GM12878 (cell line): ENCODE measurements at regions of chr9 and their contacts with region 1.

Region 1: GRCh38 chr9:36995927-36996705 is 38.0 kb downstream of the PAX5 start:
- DNase-seq: no peak
- ATAC-seq: peak; percentile 55
- H3K4me3 ChIP-seq: peak overlapping the region; percentile 47
- H3K27ac ChIP-seq: peak overlapping the region; percentile 93
- H3K4me1 ChIP-seq: peaks cover 88% of the 10 kb centered on the region
- H3K27me3 ChIP-seq: no peaks in the 10 kb centered on the region
- CTCF ChIP-seq: peak; percentile 71 to 86 (median 86)
- EP300 ChIP-seq: no peak
- POLR2A ChIP-seq: peak; percentile 29; the same call in 1 of the 2 replicates
- RAD21 ChIP-seq: peak; percentile 85

Region 2: GRCh38 chr9:36400332-36401163 is 595.6 kb before region 1 on chr9:
- CTCF ChIA-PET with region 1: no interaction called
- POLR2A ChIA-PET with region 1: no interaction called
- RAD21 ChIA-PET with region 1: no interaction called
- SMC1A ChIA-PET with region 1: no interaction called
- in situ Hi-C with region 1: no loop called
- intact Hi-C with region 1: no loop called
- DNase-seq: peak; percentile 42
- ATAC-seq: peak; percentile 90
- H3K4me3 ChIP-seq: peak overlapping the region; percentile 76
- H3K27ac ChIP-seq: peak overlapping the region; percentile 89
- H3K4me1 ChIP-seq: peaks cover 13% of the 10 kb centered on the region
- H3K27me3 ChIP-seq: no peaks in the 10 kb centered on the region
- CTCF ChIP-seq: 0 out of 6 replicates have a peak, but pooled peaks of 1 of the 3 experiments have one; percentile 3
- EP300 ChIP-seq: no peak; a peak in 1 of 4 replicates
- POLR2A ChIP-seq: peak; percentile 88
- RAD21 ChIP-seq: no peak

Region 3: DNA sequence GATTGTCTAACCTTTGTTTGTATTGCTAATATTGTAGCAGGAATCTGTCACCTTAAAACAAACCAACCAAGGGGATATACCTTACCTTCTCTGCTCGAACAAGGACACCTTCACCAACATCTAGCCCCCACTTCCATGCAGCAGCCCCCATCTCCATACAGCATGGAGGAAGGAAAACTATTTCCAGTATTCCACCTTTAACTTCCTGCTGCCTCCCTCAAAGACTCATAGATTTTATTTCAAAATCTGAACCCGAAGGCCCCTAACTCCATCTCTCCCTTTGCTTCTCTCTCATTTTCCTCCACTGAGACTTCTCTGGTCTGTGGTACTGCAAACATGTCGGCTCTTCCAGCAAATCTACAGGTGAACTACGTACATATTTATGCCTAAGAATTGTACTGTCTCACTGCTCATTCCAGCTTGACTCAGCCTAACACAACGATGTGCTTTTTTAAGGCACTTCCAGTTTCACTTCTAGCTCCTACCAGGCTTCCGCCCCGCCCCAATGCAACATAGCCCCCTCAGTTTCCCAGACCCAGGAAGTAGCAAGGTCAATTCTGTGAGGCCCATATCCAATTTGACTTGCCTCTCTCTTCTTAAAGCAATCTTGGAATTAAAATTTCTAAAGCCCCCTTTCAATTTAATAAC is 525.3 kb before region 1 on chr9:
- CTCF ChIA-PET with region 1: no interaction called
- POLR2A ChIA-PET with region 1: no interaction called
- RAD21 ChIA-PET with region 1: no interaction called
- SMC1A ChIA-PET with region 1: no interaction called
- in situ Hi-C with region 1: no loop called
- intact Hi-C with region 1: no loop called
- DNase-seq: peak; percentile 67
- ATAC-seq: peak; percentile 98
- H3K4me3 ChIP-seq: peak overlapping the region; percentile 66
- H3K27ac ChIP-seq: peak overlapping the region; percentile 91
- H3K4me1 ChIP-seq: peaks cover 15% of the 10 kb centered on the region
- H3K27me3 ChIP-seq: no peaks in the 10 kb centered on the region
- CTCF ChIP-seq: no peak
- EP300 ChIP-seq: 0 out of 4 replicates have a peak, but pooled peaks of 1 of the 2 experiments have one; percentile 11
- POLR2A ChIP-seq: peak; percentile 53
- RAD21 ChIP-seq: no peak

Region 4: DNA sequence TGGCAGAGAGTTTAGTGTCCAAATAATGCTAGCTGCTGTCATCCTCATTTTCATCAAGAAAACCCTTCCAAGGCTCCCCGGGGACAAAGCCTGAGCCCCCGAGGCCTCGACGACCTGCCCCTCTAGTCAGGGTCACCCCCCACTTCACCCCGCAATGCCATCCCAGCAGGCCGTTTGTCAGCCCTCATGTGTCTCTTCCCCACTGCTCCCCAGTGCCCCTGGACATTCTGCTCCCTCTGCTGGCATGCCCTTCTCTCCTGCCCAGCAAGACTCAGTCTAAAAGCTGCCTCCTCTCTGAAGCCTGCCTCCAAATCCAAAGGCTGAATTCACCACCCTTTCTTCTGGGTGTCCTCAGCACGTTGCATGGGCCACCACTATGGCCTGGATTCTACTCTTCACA is 21.4 kb before region 1 on chr9:
- CTCF ChIA-PET with region 1: interaction called, 22 read pairs
- POLR2A ChIA-PET with region 1: no interaction called
- RAD21 ChIA-PET with region 1: interaction called, 4 read pairs
- SMC1A ChIA-PET with region 1: interaction called, 10 read pairs
- in situ Hi-C with region 1: no loop called
- intact Hi-C with region 1: no loop called
- DNase-seq: no peak
- ATAC-seq: no peak
- H3K4me3 ChIP-seq: no peak overlapping the region
- H3K27ac ChIP-seq: no peak overlapping the region
- H3K4me1 ChIP-seq: no peaks in the 10 kb centered on the region
- H3K27me3 ChIP-seq: no peaks in the 10 kb centered on the region
- CTCF ChIP-seq: peak in 1 of 3 experiments; percentile 26; a peak in 2 of 6 replicates
- EP300 ChIP-seq: no peak
- POLR2A ChIP-seq: 0 out of 2 replicates have a peak, but pooled peaks have one; percentile 29
- RAD21 ChIP-seq: no peak

Region 5: DNA sequence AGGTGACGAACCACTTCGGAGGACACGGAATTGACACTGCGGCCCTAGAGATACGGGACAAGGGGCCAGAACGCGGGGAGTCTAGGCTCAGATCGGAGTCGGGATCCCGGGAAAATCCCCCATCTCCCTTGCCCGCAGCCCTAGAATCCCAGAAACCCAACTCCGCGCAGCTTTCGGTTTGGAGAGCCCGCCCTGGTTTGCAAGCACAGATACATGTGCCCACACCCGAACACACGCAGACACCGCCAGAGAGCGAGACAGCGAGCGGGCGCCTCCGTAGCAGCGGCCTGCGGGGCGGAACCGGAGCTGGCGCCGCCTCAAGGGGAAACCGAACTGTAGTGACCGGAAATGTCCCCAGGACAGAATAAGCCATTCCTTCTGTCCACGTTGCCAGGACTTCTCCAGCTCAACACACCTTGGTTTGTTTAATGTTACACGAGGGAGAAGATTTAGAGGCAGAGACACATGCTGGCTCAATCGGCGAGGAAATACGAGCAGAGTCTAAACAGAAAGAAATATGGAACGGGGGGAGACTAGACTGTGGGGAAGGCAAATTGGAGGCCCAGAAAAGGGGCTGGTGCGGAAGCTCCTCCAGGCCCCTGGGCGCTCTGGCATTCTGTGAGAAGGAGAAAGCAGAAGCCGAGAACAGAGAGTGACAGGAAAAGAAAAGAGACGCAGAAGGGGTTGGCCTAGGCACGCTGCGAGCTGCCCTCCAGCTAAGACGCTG is 40.8 kb after region 1 on chr9:
- CTCF ChIA-PET with region 1: interaction called, 41 read pairs
- POLR2A ChIA-PET with region 1: interaction called, 354 read pairs
- RAD21 ChIA-PET with region 1: interaction called, 175 read pairs
- SMC1A ChIA-PET with region 1: interaction called, 12 read pairs
- in situ Hi-C with region 1: no loop called
- intact Hi-C with region 1: no loop called
- DNase-seq: no peak
- ATAC-seq: peak; percentile 52
- H3K4me3 ChIP-seq: peak overlapping the region; percentile 96
- H3K27ac ChIP-seq: peak overlapping the region; percentile 92
- H3K4me1 ChIP-seq: peaks cover 8% of the 10 kb centered on the region
- H3K27me3 ChIP-seq: no peaks in the 10 kb centered on the region
- CTCF ChIP-seq: 0 out of 6 replicates have a peak, but pooled peaks of 1 of the 3 experiments have one; percentile 2
- EP300 ChIP-seq: no peak
- POLR2A ChIP-seq: 0 out of 2 replicates have a peak, but pooled peaks have one; percentile 2
- RAD21 ChIP-seq: no peak

Region 6: GRCh38 chr9:37187713-37188439 is 191.8 kb after region 1 on chr9:
- CTCF ChIA-PET with region 1: interaction called, 26 read pairs
- POLR2A ChIA-PET with region 1: interaction called, 18 read pairs
- RAD21 ChIA-PET with region 1: interaction called, 57 read pairs
- SMC1A ChIA-PET with region 1: interaction called, 31 read pairs
- in situ Hi-C with region 1: no loop called
- intact Hi-C with region 1: loop called (anchors 5 kb)
- DNase-seq: peak; percentile 75
- ATAC-seq: peak; percentile 81
- H3K4me3 ChIP-seq: peak overlapping the region; percentile 61
- H3K27ac ChIP-seq: peak overlapping the region; percentile 83
- H3K4me1 ChIP-seq: peaks cover 47% of the 10 kb centered on the region
- H3K27me3 ChIP-seq: no peaks in the 10 kb centered on the region
- CTCF ChIP-seq: no peak
- EP300 ChIP-seq: peak; percentile 31 to 66; a peak in 2 of 4 replicates
- POLR2A ChIP-seq: no peak
- RAD21 ChIP-seq: no peak

Region 7: DNA sequence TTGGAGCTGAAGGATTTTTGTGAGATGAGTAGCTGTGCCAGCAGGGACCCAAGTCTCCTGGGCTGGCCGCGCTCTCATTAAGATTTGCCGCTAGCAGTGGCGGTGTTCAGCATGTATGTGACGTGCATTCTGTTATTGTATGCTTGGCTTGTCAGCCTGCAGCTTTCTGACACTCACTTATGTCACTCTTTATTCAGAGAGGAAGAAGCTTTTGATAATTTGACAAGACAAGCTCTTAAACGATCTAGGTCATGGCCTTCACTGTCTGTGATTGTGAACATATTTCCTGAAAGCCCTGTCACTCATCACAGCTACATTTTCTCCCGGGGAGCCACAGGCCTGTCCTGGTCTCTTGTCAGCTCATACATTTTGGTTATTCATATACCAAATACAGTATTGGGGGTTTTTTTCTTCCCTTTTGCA is 328.2 kb after region 1 on chr9:
- CTCF ChIA-PET with region 1: interaction called, 60 read pairs
- POLR2A ChIA-PET with region 1: interaction called, 3 read pairs
- RAD21 ChIA-PET with region 1: interaction called, 33 read pairs
- SMC1A ChIA-PET with region 1: interaction called, 25 read pairs
- in situ Hi-C with region 1: no loop called
- intact Hi-C with region 1: no loop called
- DNase-seq: peak; percentile 43
- ATAC-seq: peak; percentile 76
- H3K4me3 ChIP-seq: peak overlapping the region; percentile 18
- H3K27ac ChIP-seq: peak overlapping the region; percentile 93
- H3K4me1 ChIP-seq: peaks cover 30% of the 10 kb centered on the region
- H3K27me3 ChIP-seq: no peaks in the 10 kb centered on the region
- CTCF ChIP-seq: no peak
- EP300 ChIP-seq: no peak
- POLR2A ChIP-seq: 0 out of 2 replicates have a peak, but pooled peaks have one; percentile 48
- RAD21 ChIP-seq: no peak

Region 8: DNA sequence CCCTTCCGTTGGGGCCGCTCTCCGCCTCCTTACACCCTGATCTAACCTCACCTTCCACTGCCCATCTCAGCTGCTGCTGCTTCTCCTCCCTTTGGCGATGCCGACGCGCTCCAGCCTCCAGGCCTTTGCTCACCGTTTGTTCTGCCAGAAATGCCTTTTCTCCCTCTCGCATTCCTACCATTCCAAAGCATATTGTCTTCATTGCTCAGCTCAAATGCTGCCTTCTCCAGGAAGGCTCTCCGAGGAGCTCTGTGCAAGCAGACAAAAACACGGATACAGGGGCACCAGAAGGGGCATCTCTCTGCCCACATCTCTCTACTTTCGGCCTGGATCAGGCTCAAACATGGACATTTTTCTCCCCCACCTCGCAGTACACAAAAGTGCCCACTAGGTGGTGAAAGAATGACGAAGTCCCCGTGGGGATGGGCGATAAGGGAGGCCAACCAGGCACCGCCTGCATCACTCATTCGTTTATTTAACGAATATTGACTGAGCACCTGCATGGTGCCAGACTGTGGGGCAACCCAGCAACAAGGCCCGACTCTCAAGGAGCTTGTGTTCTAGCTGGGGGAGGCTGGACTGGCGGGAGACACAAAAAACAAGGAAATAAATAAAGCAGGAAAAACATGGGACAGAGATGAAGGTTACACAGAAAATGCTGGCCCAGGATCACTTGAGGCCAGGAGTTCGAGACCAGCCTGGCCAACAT is 419.0 kb after region 1 on chr9:
- CTCF ChIA-PET with region 1: interaction called, 17 read pairs
- POLR2A ChIA-PET with region 1: interaction called, 3 read pairs
- RAD21 ChIA-PET with region 1: interaction called, 46 read pairs
- SMC1A ChIA-PET with region 1: interaction called, 10 read pairs
- in situ Hi-C with region 1: no loop called
- intact Hi-C with region 1: no loop called
- DNase-seq: no peak
- ATAC-seq: peak; percentile 50
- H3K4me3 ChIP-seq: no peak overlapping the region
- H3K27ac ChIP-seq: peak overlapping the region; percentile 45
- H3K4me1 ChIP-seq: peaks cover 46% of the 10 kb centered on the region
- H3K27me3 ChIP-seq: no peaks in the 10 kb centered on the region
- CTCF ChIP-seq: peak; percentile 82 to 89 (median 88)
- EP300 ChIP-seq: no peak
- POLR2A ChIP-seq: no peak
- RAD21 ChIP-seq: peak; percentile 80

Region 9: DNA sequence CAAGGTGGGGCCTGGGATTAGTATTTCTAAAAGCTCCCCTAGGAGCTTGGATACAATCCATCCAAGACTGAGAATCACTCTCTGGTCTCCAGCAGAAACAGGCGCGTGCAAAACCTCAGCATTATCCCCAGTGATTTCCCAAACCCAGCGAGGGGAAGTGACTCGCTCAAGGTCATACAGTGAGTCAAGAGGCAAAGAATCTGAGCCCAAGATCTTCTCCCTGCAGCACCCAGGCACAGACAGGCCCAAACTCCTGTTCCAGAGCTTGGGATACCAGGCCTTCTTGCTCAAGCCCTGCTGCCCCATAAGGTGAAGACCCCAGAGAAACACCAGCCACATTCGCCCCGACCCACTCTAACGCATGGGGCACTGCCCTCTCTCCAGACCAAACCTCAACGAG is 1039.8 kb after region 1 on chr9:
- CTCF ChIA-PET with region 1: no interaction called
- POLR2A ChIA-PET with region 1: no interaction called
- RAD21 ChIA-PET with region 1: no interaction called
- SMC1A ChIA-PET with region 1: no interaction called
- in situ Hi-C with region 1: no loop called
- intact Hi-C with region 1: no loop called
- DNase-seq: no peak
- ATAC-seq: no peak
- H3K4me3 ChIP-seq: no peak overlapping the region
- H3K27ac ChIP-seq: no peak overlapping the region
- H3K4me1 ChIP-seq: peaks cover 5% of the 10 kb centered on the region
- H3K27me3 ChIP-seq: no peaks in the 10 kb centered on the region
- CTCF ChIP-seq: no peak
- EP300 ChIP-seq: no peak
- POLR2A ChIP-seq: no peak
- RAD21 ChIP-seq: no peak